ENCODE measurements at regions of chr19 and their contacts with region 1.

Region 1: DNA sequence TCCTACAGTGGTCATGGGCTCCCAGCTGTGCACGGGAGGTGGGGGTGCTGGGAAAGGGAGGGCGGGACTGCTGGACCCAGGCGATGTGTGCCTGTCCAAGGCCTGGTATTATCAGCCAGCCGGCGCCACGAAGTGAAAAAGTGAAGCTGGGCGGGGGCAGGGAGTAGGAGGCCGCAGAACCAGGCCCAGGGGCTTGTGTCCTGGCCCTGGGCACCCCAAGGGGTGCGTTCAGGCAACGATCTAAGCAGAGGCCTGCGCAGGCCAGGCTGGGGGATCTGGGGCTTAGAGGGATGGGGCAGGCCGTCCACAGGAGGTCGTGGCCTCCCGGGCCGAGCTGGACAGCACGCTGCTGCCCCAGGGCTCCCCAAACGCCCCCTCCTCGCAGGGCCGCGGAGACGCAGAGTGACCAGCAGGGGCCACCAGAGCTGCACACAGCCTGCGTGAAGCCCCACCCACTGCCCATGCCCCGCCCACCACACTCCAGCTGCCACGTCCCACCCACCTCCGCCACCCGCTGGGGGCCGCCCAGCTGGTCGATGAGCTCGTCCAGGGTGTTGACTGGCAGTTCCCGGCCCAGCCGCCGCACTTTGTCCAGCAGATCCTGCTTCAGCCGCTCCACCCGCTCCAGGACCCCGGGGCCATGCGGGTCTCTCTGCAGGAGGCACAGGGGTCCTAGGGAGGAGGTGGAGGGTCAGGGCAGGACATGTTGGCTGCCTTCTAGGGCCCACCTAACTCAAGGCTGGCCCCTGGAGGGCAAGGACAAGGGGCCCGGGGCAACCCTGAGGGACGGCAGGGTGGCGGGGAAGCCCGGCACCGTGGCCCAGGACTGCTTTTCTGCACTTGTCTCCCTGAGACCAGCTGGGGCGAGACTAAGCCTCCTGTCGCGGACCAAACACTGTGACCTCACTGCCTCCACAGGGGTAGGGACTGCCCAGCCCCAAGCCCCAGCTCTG is 9.5 kb downstream of the GPX4 start:
- DNase-seq: peak; percentile 69 to 72
- H3K4me3 ChIP-seq: no peak overlapping the region
- H3K27ac ChIP-seq: no peak overlapping the region
- H3K4me1 ChIP-seq: peaks cover 5% of the 10 kb centered on the region; the same call in 1 of the 2 replicates
- H3K27me3 ChIP-seq: no peaks in the 10 kb centered on the region
- CTCF ChIP-seq: peak; percentile 82

Region 2: DNA sequence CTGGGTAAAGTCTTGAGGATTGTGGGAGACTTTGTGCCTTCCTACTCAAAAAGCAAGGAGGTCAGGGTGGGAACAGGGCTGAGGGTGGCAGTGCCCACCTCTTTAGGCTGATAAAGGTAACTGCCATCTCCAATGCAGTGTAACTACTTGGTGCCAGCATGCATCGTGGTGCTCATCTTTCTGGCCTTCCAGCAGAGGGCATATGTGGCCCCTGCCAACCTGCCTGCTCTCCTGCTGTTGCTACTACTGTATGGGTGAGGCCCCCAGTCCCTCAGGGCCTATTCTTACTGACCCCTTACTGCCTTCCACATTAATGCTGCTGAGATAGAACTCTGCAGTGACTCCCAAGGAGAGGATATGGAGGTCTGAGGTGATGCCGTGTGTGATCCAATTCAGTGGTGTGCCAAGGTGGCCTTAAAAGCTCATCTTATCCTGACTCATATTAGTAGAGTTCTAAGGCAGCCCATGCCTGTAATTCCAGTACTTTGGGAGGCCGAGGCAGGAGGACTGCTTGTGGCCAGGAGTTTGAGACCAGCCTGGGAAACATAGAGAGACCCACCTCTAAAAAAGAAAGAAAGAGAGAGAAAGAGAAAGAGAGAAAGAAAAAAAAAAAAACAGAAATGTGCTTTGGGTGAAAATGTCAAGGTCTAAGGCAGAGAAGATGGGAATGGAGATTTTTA is 56.0 kb before region 1 on chr19:
- CTCF ChIA-PET with region 1: no interaction called
- POLR2A ChIA-PET with region 1: no interaction called
- intact Hi-C with region 1: no loop called
- DNase-seq: peak in 1 of 2 experiments; percentile 43
- H3K4me3 ChIP-seq: no peak overlapping the region
- H3K27ac ChIP-seq: no peak overlapping the region
- H3K4me1 ChIP-seq: no peaks in the 10 kb centered on the region
- H3K27me3 ChIP-seq: no peaks in the 10 kb centered on the region
- CTCF ChIP-seq: peak; percentile 61

Region 3: GRCh38 chr19:1189419-1189818 is 76.1 kb after region 1 on chr19:
- CTCF ChIA-PET with region 1: interaction called, 11 read pairs
- POLR2A ChIA-PET with region 1: interaction called, 12 read pairs
- intact Hi-C with region 1: no loop called
- DNase-seq: peak; percentile 44 to 50
- H3K4me3 ChIP-seq: no peak overlapping the region
- H3K27ac ChIP-seq: peak overlapping the region; percentile 57; the same call in 1 of the 2 replicates
- H3K4me1 ChIP-seq: peaks cover 26% of the 10 kb centered on the region
- H3K27me3 ChIP-seq: no peaks in the 10 kb centered on the region
- CTCF ChIP-seq: no peak